ENCODE measurements at regions of chr21 and their contacts with region 1.

Region 1: DNA sequence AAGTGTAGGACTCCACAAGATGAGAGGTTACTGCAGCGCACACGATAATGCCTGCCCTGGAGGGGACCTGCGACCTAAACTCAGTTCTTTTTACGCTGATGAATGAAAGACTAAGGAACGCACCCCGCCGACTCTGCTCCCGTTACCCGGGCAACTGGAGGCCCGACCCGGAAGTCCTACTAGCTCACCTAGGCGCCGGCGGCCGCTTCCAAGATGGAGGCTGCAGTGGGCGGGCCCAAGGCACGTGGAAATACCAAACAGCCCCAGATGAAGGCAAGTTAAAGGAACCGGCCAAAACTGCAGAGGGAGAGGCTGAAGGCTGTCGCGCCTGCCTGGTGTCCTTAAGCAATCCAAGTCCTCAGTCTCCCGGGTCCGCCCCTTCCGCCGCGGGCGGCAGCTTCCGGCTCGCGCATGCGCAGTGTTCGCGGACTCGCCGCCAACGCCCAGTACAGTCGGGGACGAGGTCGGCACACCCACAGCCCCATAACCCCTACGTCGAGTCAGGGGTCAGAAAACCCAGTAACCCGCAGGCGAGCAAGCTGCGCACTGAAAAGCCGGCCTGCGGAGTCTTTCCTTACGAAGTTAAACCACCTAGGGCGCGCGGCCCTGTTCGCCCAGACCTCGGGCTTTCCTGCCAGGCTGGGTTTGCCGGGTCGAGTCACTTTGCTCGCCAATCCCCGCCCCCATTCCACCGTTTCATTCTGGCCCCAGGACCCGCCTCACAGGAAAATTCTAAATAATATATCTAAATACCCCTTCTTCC is at the start of gene SETD4:
- DNase-seq: peak; percentile 95 to 98 (median 96)
- ATAC-seq: peak; percentile 98
- H3K4me3 ChIP-seq: peak within 1 kb of the TSS; percentile 58
- H3K27ac ChIP-seq: peak within 1 kb of the TSS; percentile 88
- H3K4me1 ChIP-seq: no peaks in the 10 kb centered on the region
- H3K27me3 ChIP-seq: no peaks in the 10 kb centered on the region
- total RNA-seq, gene SETD4: 8.3 to 13.2 (median 9.3) TPM

Region 2: DNA sequence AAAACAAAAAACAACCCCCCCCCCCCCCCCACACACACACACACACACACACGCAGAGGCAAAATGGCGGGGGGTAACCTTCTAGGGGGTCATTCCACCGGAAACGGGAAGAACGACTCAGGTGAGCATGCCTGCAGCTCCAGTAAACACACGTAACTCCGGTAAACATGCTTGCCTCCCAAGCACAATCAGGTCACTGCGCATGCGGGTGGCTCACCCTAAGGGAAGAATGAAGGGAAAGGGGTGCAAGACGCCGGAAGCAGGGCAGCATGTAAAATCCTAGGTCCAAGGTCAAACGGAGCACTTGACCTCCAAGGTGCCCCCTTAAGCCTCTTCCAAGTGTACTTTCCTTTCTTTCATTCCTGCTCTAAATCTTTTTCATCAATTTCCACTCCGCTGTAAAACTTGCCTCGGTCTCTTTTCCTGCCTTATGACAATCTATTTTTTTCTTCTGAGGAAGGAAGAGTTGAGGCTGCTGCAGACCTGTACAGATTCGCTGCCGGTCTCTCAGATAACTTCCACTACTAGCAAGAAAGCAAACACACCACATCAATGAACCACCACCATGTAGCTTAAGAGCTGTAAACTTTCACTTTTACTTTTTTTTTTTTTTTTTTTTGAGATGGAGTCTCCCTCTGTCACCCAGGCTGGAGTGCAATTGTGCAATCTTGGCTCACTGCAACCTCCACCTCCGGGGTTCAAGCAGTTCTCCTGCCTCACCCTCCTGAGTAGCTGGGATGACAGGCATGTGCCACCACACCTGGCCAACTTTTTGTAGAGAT is 53.5 kb after region 1 on chr21:
- intact Hi-C with region 1: loop called in 1 of 4 experiments (anchors 10 kb)
- DNase-seq: peak in 1 of 3 donors; percentile 55
- ATAC-seq: peak in 1 of 2 donors; percentile 7
- H3K4me3 ChIP-seq: no peak overlapping the region
- H3K27ac ChIP-seq: no peak overlapping the region
- H3K4me1 ChIP-seq: no peaks in the 10 kb centered on the region
- H3K27me3 ChIP-seq: no peaks in the 10 kb centered on the region

Measured in right cardiac atrium (tissue), 5 donors.